WTC11 (cell line): ENCODE measurements at regions of chr22 and their contacts with region 1.

Region 1: GRCh38 chr22:30444632-30445437 is 19.3 kb downstream of the MTFP1 start:
- DNase-seq: peak; percentile 85
- ATAC-seq: peak; percentile 90
- H3K4me3 Mint-ChIP-seq: peak overlapping the region; percentile 56
- H3K27ac Mint-ChIP-seq: no peak overlapping the region
- H3K4me1 Mint-ChIP-seq: peaks cover 7% of the 10 kb centered on the region
- H3K27me3 Mint-ChIP-seq: no peaks in the 10 kb centered on the region; the same call in 1 of the 2 replicates
- CTCF ChIP-seq: peak; percentile 91

Region 2: GRCh38 chr22:30373331-30374325 is 71.2 kb before region 1 on chr22:
- CTCF ChIA-PET with region 1: no interaction called
- POLR2A ChIA-PET with region 1: no interaction called
- DNase-seq: no peak
- ATAC-seq: no peak
- H3K4me3 Mint-ChIP-seq: no peak overlapping the region
- H3K27ac Mint-ChIP-seq: no peak overlapping the region
- H3K4me1 Mint-ChIP-seq: 0 out of 2 replicates have a peak, but pooled peaks cover 3% of the 10 kb centered on the region
- H3K27me3 Mint-ChIP-seq: no peaks in the 10 kb centered on the region
- CTCF ChIP-seq: no peak

Region 3: GRCh38 chr22:30485362-30485988 is 40.6 kb after region 1 on chr22:
- CTCF ChIA-PET with region 1: interaction called, 38 read pairs
- POLR2A ChIA-PET with region 1: no interaction called
- DNase-seq: peak; percentile 84
- ATAC-seq: peak; percentile 96
- H3K4me3 Mint-ChIP-seq: no peak overlapping the region
- H3K27ac Mint-ChIP-seq: no peak overlapping the region
- H3K4me1 Mint-ChIP-seq: no peaks in the 10 kb centered on the region
- H3K27me3 Mint-ChIP-seq: peaks cover 2% of the 10 kb centered on the region; the same call in 1 of the 2 replicates
- CTCF ChIP-seq: peak; percentile 98

Region 4: GRCh38 chr22:30562366-30562765 is 117.5 kb after region 1 on chr22:
- CTCF ChIA-PET with region 1: no interaction called
- POLR2A ChIA-PET with region 1: no interaction called
- DNase-seq: no peak
- ATAC-seq: no peak
- H3K4me3 Mint-ChIP-seq: no peak overlapping the region
- H3K27ac Mint-ChIP-seq: no peak overlapping the region; the same call in 1 of the 2 replicates
- H3K4me1 Mint-ChIP-seq: peaks cover 40% of the 10 kb centered on the region
- H3K27me3 Mint-ChIP-seq: no peaks in the 10 kb centered on the region; the same call in none of the 2 replicates
- CTCF ChIP-seq: no peak